ENCODE measurements at regions of chr3 and their contacts with region 1.

Region 1: GRCh38 chr3:13657660-13658435 is 108.9 kb downstream of the FBLN2 start:
- DNase-seq: peak; percentile 83
- ATAC-seq: peak; percentile 87
- H3K4me3 Mint-ChIP-seq: no peak overlapping the region
- H3K27ac Mint-ChIP-seq: no peak overlapping the region
- H3K4me1 Mint-ChIP-seq: peaks cover 18% of the 10 kb centered on the region
- H3K27me3 Mint-ChIP-seq: peaks cover 2% of the 10 kb centered on the region

Region 2: DNA sequence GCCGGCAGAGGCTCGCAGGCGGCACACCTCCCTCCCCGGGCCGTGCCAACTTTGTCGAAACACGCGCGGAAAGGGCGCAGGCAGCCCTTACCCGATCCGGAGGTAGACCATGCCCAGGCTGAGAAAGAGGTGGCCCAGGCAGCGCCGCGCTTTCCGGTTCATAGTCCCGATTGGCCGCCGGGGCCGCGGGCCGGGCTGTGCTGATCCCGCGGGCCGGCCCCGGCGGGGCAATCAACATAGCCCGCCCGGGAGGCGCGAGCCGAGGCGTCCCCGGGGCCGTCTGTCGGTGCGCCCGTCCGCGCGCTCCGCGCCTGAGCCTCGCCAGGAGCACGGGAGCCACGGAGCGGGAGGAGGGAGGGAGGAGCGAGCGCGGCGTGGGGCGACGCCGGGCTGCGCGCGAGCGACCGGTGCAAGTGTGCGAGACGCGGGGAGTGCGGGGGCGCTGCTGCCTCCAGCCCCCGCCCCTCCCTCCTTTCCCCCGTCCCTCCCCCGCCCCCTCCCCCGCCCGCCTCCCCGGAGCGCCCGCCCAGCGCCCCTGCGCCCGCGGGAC is 221.9 kb after region 1 on chr3 and contains the start of gene WNT7A:
- CTCF ChIA-PET with region 1: interaction called, 182 read pairs
- POLR2A ChIA-PET with region 1: no interaction called
- intact Hi-C with region 1: loop called (anchors 1 kb)
- DNase-seq: peak; percentile 60
- ATAC-seq: peak; percentile 35
- H3K4me3 Mint-ChIP-seq: peak within 1 kb of the TSS; percentile 65
- H3K27ac Mint-ChIP-seq: no peak within 1 kb of the TSS
- H3K4me1 Mint-ChIP-seq: peaks cover 5% of the 10 kb centered on the region
- H3K27me3 Mint-ChIP-seq: peaks cover 11% of the 10 kb centered on the region
- total RNA-seq, gene WNT7A: 0.11 to 0.39 TPM